Endothelial cell of umbilical vein (primary cell): ENCODE measurements at regions of chr17 and their contacts with region 1.

Region 1: GRCh38 chr17:55177159-55177854 is 87.5 kb upstream of the HLF start:
- DNase-seq: peak; percentile 89
- H3K4me3 ChIP-seq: peak overlapping the region in 1 of 3 experiments; percentile 18
- H3K27ac ChIP-seq: peak overlapping the region; percentile 63
- H3K4me1 ChIP-seq: peaks cover 16% of the 10 kb centered on the region
- H3K27me3 ChIP-seq: no peaks in the 10 kb centered on the region
- CTCF ChIP-seq: peak in 1 of 2 donors; percentile 21
- POLR2A ChIP-seq: no peak

Region 2: GRCh38 chr17:55161935-55162555 is 15.3 kb before region 1 on chr17:
- CTCF ChIA-PET with region 1: no interaction called
- POLR2A ChIA-PET with region 1: no interaction called
- dilution Hi-C with region 1: no loop called
- intact Hi-C with region 1: loop called (anchors 1 kb)
- DNase-seq: peak; percentile 53
- H3K4me3 ChIP-seq: no peak overlapping the region
- H3K27ac ChIP-seq: peak overlapping the region; percentile 43
- H3K4me1 ChIP-seq: peaks cover 29% of the 10 kb centered on the region
- H3K27me3 ChIP-seq: no peaks in the 10 kb centered on the region
- CTCF ChIP-seq: no peak
- POLR2A ChIP-seq: no peak

Region 3: GRCh38 chr17:55238179-55238930 is 61.0 kb after region 1 on chr17:
- CTCF ChIA-PET with region 1: no interaction called
- POLR2A ChIA-PET with region 1: no interaction called
- dilution Hi-C with region 1: no loop called
- intact Hi-C with region 1: loop called (anchors 2 kb)
- DNase-seq: peak; percentile 83
- H3K4me3 ChIP-seq: peak overlapping the region; percentile 40 to 57 (median 57)
- H3K27ac ChIP-seq: no peak overlapping the region
- H3K4me1 ChIP-seq: peaks cover 3% of the 10 kb centered on the region
- H3K27me3 ChIP-seq: peaks cover 0 to 11% of the 10 kb centered on the region in 2 experiments
- CTCF ChIP-seq: peak in 1 of 2 donors; percentile 0
- POLR2A ChIP-seq: no peak

Region 4: DNA sequence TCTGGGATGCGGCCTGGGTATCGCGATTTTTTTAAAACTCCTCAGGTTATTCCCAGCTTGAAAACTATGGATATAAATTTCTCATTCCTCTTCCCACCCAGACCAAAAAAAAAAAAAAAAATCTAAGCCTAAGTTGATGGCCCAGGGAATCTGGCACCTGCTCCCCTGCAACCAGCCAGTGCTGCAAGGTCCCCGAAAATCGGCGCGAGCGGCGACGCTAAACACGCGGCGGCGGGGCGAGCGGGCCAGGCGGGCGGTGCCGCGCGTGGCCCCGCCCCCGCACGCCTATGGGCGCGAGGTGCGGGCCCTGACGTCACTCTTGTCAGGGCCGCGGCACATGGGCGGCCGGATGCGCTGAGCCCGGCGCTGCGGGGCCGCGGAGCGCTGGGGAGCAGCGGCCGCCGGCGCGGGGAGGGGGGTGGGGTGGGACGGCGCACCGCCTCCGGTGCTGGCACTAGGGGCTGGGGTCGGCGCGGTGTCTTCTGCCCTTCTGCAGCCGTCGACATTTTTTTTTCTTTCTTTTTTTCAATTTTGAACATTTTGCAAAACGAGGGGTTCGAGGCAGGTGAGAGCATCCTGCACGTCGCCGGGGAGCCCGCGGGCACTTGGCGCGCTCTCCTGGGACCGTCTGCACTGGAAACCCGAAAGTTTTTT is 87.5 kb after region 1 on chr17 and contains the start of gene HLF:
- CTCF ChIA-PET with region 1: no interaction called
- POLR2A ChIA-PET with region 1: no interaction called
- dilution Hi-C with region 1: no loop called
- intact Hi-C with region 1: loop called (anchors 5 kb)
- DNase-seq: peak; percentile 52
- H3K4me3 ChIP-seq: peak within 1 kb of the TSS in 2 of 3 experiments; percentile 20 to 31
- H3K27ac ChIP-seq: no peak within 1 kb of the TSS
- H3K4me1 ChIP-seq: peaks cover 2% of the 10 kb centered on the region
- H3K27me3 ChIP-seq: peaks cover 47 to 81% of the 10 kb centered on the region in 2 experiments
- CTCF ChIP-seq: no peak
- POLR2A ChIP-seq: no peak
- total RNA-seq, gene HLF: not detected in 2 replicates